Activated CD4-positive, alpha-beta T cell treated with anti-CD3 and anti-CD28 coated beads, Interleukin-2, amount 10 ng/mL, durations not matched to agents 24 days and 14 days (primary cell): ENCODE measurements at regions of chr2 and their contacts with region 1.

Region 1: GRCh38 chr2:27356382-27357181 is at the start of gene GTF3C2:
- DNase-seq: peak; percentile 97
- H3K4me3 Mint-ChIP-seq: peak within 1 kb of the TSS; percentile 99
- H3K27ac Mint-ChIP-seq: peak within 1 kb of the TSS; percentile 100
- H3K4me1 Mint-ChIP-seq: peaks cover 42% of the 10 kb centered on the region
- H3K27me3 Mint-ChIP-seq: peaks cover 2% of the 10 kb centered on the region
- total RNA-seq, gene GTF3C2: 80.1 and 83.8 TPM in 2 replicates

Region 2: GRCh38 chr2:27071277-27071989 is 285.1 kb before region 1 on chr2 and contains the start of gene OST4:
- intact Hi-C with region 1: loop called (anchors 5 kb)
- DNase-seq: peak; percentile 98
- H3K4me3 Mint-ChIP-seq: peak within 1 kb of the TSS; percentile 99
- H3K27ac Mint-ChIP-seq: peak within 1 kb of the TSS; percentile 93
- H3K4me1 Mint-ChIP-seq: peaks cover 58% of the 10 kb centered on the region
- H3K27me3 Mint-ChIP-seq: no peaks in the 10 kb centered on the region
- total RNA-seq, gene OST4: 314 and 326 TPM in 2 replicates

Region 3: DNA sequence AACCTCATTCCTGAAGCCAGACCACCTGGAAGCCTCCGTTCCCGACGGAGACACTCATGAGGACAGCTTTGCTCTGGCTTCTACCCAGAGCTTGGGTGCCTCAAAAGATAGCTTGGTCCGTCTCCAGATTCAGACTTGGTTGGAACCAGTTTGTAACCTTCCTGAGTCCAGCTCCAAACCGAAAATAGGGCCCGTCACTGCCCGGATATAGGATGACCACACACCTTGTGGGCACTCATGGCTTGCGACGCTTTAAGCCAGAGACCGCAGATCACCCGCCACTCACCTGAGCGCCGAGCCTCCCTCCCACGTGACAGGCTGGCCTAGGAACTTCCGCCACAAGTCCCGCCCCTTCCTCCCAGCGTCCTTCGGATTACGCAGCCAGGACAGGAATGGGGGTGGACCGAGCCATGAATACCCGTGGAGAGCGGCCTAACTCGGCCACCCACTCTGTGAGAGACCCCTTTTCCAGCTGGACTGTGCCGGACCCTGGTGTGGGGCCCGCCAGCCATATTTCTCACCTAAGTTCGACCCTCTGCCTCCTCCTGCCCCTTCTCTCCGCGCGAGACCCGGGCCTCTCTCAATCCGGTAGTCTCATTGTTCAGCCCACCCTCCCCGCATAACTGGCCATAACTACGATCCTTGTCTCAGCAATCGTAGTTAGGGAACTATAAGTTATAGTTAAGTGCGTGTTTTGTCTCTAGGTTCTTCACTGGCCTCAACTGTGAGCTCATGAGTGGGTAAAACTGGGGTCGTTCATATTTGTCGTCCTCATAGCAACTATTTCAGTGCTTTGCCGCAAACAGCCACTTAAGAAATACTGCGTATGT is 33.6 kb before region 1 on chr2 and contains the start of gene MPV17:
- intact Hi-C with region 1: loop called (anchors 2 kb)
- DNase-seq: peak; percentile 96
- H3K4me3 Mint-ChIP-seq: peak within 1 kb of the TSS; percentile 99
- H3K27ac Mint-ChIP-seq: peak within 1 kb of the TSS; percentile 98
- H3K4me1 Mint-ChIP-seq: peaks cover 15% of the 10 kb centered on the region
- H3K27me3 Mint-ChIP-seq: no peaks in the 10 kb centered on the region
- total RNA-seq, gene MPV17: 86.8 and 89.1 TPM in 2 replicates

Region 4: GRCh38 chr2:27409321-27410073 is 52.9 kb after region 1 on chr2 and contains the start of gene PPM1G:
- intact Hi-C with region 1: loop called (anchors 1 kb)
- DNase-seq: peak; percentile 99
- H3K4me3 Mint-ChIP-seq: peak within 1 kb of the TSS; percentile 98
- H3K27ac Mint-ChIP-seq: peak within 1 kb of the TSS; percentile 89
- H3K4me1 Mint-ChIP-seq: peaks cover 30% of the 10 kb centered on the region
- H3K27me3 Mint-ChIP-seq: peaks cover 5% of the 10 kb centered on the region
- total RNA-seq, gene PPM1G: 165 and 167 TPM in 2 replicates

Region 5: GRCh38 chr2:27489498-27490397 is 133.2 kb after region 1 on chr2 and contains the start of gene IFT172:
- intact Hi-C with region 1: loop called (anchors 1 kb)
- DNase-seq: peak; percentile 100
- H3K4me3 Mint-ChIP-seq: peak within 1 kb of the TSS; percentile 84
- H3K27ac Mint-ChIP-seq: peak within 1 kb of the TSS; percentile 87
- H3K4me1 Mint-ChIP-seq: peaks cover 20% of the 10 kb centered on the region
- H3K27me3 Mint-ChIP-seq: peaks cover 18% of the 10 kb centered on the region
- total RNA-seq, gene IFT172: 12.4 and 12.9 TPM in 2 replicates